GM13976 (cell line): ENCODE measurements at regions of chr2 and their contacts with region 1.

Region 1: GRCh38 chr2:215931256-215931903 is 82.0 kb downstream of the MREG start:
- DNase-seq: peak; percentile 62
- CTCF ChIP-seq: peak; percentile 79

Region 2: GRCh38 chr2:215454519-215455246 is 476.7 kb before region 1 on chr2:
- in situ Hi-C with region 1: loop called (anchors 10 kb)
- DNase-seq: peak; percentile 38
- CTCF ChIP-seq: peak; percentile 62

Region 3: DNA sequence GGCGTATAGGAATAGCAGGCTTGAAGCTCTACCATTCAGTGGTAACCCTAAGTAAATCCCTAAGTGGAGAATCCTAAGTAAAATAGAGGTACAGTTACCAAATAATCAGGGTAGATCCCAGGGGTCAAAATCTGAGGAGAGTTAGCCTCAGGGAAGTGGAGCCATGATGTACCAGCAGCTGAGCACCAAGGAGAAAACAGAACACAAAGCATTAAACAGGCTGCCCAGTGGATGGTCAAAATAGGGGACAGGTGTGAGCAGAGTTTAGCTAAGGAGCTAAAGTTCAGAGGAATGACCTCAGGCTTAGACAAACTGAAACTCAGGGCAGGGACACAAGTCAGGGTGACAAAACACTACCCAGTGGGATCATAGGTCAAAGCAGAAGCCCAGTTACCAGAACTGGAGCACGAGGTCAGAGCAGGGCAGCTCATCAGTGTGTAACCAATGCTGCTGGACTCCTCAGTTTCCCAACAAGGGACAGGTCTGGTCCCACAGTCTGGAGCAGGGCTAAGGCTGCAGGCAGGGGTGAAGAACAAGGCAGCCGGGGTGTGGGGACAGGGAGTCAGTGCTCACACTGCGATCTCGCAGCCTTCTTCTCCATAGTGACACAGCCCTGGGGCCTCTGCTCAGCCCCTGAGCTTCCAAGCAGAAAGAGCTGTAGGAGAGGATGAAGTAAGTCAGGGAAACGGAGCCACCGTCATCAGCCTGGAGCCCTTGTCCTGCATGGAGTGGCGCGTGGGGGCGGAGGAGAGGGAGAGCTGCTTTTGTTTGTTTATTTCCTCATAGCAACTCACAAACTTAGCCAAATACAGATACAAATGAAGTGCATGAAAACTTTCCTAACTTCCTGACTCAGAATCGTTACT is 182.1 kb before region 1 on chr2:
- in situ Hi-C with region 1: no loop called
- DNase-seq: no peak
- CTCF ChIP-seq: no peak